Activated CD4-positive, alpha-beta T cell treated with anti-CD3 and anti-CD28 coated beads for 36 hours (primary cell): ENCODE measurements at regions of chr4 and their contacts with region 1.

Region 1: DNA sequence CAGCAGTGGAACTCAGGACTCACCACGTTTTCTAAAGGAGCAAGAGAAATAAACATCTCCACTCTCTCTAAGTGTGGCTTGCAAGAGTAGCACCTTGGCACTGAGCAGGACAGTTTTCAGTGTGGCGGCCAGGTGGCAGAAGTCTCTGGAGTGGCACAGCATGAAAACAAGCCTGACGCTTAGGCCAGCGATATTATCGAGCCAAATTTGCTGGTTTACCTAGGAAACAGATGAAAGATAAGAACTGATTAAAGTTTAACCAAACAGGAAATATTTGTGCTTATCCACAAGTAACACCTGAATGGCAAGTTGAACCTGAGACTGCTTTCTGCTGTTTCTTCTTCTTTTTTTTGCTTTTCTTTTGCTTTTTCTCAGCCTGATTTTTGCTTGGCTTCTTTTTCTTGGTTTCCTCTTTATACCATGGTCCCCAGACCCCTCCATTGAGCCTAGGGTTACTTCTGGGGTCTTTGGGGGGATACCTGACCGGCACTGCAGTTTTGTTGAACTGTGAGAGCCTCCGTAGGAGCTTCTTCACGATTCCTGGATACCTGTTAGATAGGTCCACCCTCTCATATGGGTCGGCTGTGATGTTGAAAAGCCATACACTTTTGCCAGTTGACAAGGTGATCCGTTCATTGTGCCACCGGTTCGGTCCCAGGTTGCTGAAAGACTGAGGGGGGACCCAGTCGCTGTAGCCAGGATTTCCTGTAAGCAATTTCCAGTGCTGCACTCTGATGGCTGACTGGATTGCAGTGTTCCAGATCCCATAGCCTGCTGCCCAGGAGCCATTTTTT is 77.3 kb downstream of the ARSJ start:
- DNase-seq: peak; percentile 78
- ATAC-seq: peak; percentile 96
- H3K4me3 Mint-ChIP-seq: peak overlapping the region; percentile 20
- H3K27ac Mint-ChIP-seq: peak overlapping the region; percentile 81
- H3K4me1 Mint-ChIP-seq: peaks cover 64% of the 10 kb centered on the region
- H3K27me3 Mint-ChIP-seq: no peaks in the 10 kb centered on the region

Region 2: GRCh38 chr4:114077610-114078009 is 175.4 kb after region 1 on chr4:
- CTCF ChIA-PET with region 1: no interaction called
- POLR2A ChIA-PET with region 1: no interaction called
- intact Hi-C with region 1: loop called in 1 of 2 experiments (anchors 5 kb)
- DNase-seq: no peak
- ATAC-seq: no peak
- H3K4me3 Mint-ChIP-seq: no peak overlapping the region
- H3K27ac Mint-ChIP-seq: no peak overlapping the region
- H3K4me1 Mint-ChIP-seq: no peaks in the 10 kb centered on the region
- H3K27me3 Mint-ChIP-seq: peaks cover 6% of the 10 kb centered on the region